H1 (cell line): ENCODE measurements at regions of chr16 and their contacts with region 1.

Region 1: DNA sequence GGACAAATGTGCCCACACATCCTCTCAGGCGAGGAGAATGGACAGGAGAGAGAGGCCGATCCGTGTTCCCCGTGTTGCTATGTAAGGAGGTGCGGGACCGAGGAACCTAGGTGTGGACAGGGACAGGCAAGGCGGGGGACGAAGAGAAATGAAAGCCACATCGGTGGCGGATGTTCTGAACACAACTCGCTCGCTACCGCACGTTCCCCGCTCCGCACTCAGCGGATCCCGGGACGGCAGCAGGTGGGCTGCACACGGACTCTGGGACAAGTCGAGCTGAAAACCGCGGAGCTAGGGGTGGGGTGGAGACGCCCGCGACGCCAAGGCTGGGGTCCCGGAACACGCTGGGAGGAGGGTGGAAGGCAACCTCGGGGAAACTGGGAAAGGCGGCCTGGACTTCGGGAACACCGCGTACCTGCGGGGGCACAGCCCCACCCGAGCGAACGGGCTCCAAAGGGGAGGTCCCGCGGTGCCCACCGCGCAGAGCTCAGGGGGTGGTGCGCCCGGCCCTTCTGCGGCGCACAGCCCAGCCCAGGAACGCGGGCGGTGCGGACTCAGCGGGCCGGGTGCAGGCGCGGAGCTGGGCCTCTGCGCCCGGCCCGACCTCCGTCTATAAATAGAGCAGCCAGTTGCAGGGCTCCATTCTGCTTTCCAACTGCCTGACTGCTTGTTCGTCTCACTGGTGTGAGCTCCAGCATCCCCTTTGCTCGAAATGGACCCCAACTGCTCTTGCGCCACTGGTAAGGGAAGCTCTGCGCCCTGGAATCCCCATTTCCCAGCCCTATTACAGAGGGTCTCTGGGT is at the start of gene MT1E:
- DNase-seq: peak in 1 of 2 experiments; percentile 66
- H3K4me3 ChIP-seq: peak within 1 kb of the TSS; percentile 26 to 61 (median 46)
- H3K27ac ChIP-seq: no peak within 1 kb of the TSS
- H3K4me1 ChIP-seq: peaks cover 0 to 17% (median 14%) of the 10 kb centered on the region in 4 experiments; a peak in 6 of 7 replicates
- H3K27me3 ChIP-seq: peaks cover 53 to 86% (median 82%) of the 10 kb centered on the region in 4 experiments
- CTCF ChIP-seq: no peak
- EP300 ChIP-seq: no peak
- POLR2A ChIP-seq: no peak
- RAD21 ChIP-seq: no peak
- total RNA-seq, gene MT1E: 3.5 and 7.9 TPM in 2 replicates

Region 2: DNA sequence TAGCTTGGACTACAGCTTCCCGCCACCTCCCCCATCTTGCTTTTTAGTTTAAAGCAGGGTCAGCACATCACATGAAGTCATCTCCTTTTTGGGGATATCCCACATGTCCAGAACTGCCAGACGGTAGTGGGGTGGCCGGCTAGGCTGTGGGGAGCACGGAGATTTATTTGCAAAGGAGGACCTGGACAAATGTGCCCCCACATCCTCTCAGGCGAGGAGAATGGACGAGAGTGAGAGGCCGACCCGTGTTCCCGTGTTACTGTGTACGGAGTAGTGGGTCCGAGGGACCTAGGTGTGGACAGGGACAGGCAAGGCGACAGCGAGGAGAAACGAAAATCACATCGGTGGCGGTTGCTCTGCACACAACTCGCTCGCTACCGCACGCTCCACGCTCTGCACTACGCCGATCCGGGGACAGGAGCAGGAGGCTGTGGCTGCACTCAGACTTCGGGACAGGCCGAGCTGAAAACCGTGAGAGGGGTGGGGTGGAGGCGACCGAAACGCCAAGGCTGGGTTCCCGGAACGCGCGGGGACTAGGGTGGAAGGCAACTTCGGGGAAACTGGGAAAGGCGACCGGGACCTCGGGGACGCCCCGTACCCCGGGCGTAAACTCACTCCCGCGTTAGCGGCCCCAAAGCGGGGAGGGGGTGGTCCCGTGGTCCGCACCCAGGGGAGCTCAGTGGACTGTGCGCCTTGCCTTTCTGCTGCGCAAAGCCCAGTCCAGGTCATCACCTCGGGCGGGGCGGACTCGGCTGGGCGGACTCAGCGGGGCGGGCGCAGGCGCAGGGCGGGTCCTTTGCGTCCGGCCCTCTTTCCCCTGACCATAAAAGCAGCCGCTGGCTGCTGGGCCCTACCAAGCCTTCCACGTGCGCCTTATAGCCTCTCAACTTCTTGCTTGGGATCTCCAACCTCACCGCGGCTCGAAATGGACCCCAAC is 12.7 kb after region 1 on chr16 and contains the start of gene MT1A:
- CTCF ChIA-PET with region 1: interaction called, 12 read pairs
- POLR2A ChIA-PET with region 1: interaction called, 32 read pairs
- DNase-seq: peak in 1 of 2 experiments; percentile 81
- H3K4me3 ChIP-seq: peak within 1 kb of the TSS; percentile 7 to 56 (median 27); a peak in 6 of 8 replicates
- H3K27ac ChIP-seq: no peak within 1 kb of the TSS
- H3K4me1 ChIP-seq: peaks cover 3 to 19% (median 8%) of the 10 kb centered on the region in 4 experiments
- H3K27me3 ChIP-seq: peaks cover 90 to 100% (median 99%) of the 10 kb centered on the region in 4 experiments
- CTCF ChIP-seq: no peak
- EP300 ChIP-seq: no peak
- POLR2A ChIP-seq: no peak
- RAD21 ChIP-seq: no peak
- total RNA-seq, gene MT1A: not detected in 2 replicates

Region 3: GRCh38 chr16:56657555-56658326 is 32.4 kb after region 1 on chr16 and contains the start of gene MT1F:
- CTCF ChIA-PET with region 1: interaction called, 7 read pairs
- POLR2A ChIA-PET with region 1: interaction called, 21 read pairs
- DNase-seq: peak; percentile 64 to 86
- H3K4me3 ChIP-seq: peak within 1 kb of the TSS; percentile 52 to 76 (median 54)
- H3K27ac ChIP-seq: no peak within 1 kb of the TSS
- H3K4me1 ChIP-seq: peaks cover 0 to 12% (median 5%) of the 10 kb centered on the region in 4 experiments; a peak in 6 of 7 replicates
- H3K27me3 ChIP-seq: peaks cover 39 to 68% (median 62%) of the 10 kb centered on the region in 4 experiments
- CTCF ChIP-seq: no peak
- EP300 ChIP-seq: no peak
- POLR2A ChIP-seq: no peak
- RAD21 ChIP-seq: peak; percentile 15 to 35; a peak in 3 of 4 replicates
- total RNA-seq, gene MT1F: 5.2 and 5.9 TPM in 2 replicates

Region 4: DNA sequence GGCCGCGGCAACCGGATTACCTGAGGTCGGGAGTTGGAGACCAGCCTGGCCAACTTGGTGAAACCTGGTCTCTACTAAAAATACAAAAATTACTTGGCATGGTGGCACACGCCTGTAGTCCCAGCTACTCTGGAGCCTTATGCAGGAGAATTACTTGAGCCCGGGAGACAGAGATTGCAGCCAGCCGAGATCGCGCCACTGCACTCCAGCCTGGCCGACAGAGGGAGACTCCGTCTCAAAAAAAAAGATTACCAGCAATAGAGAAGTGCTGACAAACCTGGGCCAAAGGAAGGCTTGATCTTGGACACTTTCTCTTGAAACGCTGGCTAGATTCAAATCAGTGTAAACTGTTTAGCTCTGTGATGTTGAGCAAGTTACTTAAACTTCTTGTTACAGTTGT is 48.6 kb after region 1 on chr16:
- CTCF ChIA-PET with region 1: interaction called, 3 read pairs
- POLR2A ChIA-PET with region 1: interaction called, 57 read pairs
- DNase-seq: no peak
- H3K4me3 ChIP-seq: no peak overlapping the region
- H3K27ac ChIP-seq: no peak overlapping the region
- H3K4me1 ChIP-seq: peaks cover 3 to 25% (median 15%) of the 10 kb centered on the region in 4 experiments
- H3K27me3 ChIP-seq: peaks cover 30 to 71% (median 52%) of the 10 kb centered on the region in 4 experiments
- CTCF ChIP-seq: peak; percentile 60 to 73 (median 64)
- EP300 ChIP-seq: no peak
- POLR2A ChIP-seq: no peak
- RAD21 ChIP-seq: peak; percentile 68 to 78

Region 5: GRCh38 chr16:56753410-56753809 is 128.1 kb after region 1 on chr16:
- CTCF ChIA-PET with region 1: no interaction called
- POLR2A ChIA-PET with region 1: no interaction called
- DNase-seq: no peak
- H3K4me3 ChIP-seq: no peak overlapping the region
- H3K27ac ChIP-seq: no peak overlapping the region
- H3K4me1 ChIP-seq: no peaks in the 10 kb centered on the region
- H3K27me3 ChIP-seq: no peaks in the 10 kb centered on the region
- CTCF ChIP-seq: no peak
- EP300 ChIP-seq: no peak
- POLR2A ChIP-seq: no peak
- RAD21 ChIP-seq: no peak

Region 6: DNA sequence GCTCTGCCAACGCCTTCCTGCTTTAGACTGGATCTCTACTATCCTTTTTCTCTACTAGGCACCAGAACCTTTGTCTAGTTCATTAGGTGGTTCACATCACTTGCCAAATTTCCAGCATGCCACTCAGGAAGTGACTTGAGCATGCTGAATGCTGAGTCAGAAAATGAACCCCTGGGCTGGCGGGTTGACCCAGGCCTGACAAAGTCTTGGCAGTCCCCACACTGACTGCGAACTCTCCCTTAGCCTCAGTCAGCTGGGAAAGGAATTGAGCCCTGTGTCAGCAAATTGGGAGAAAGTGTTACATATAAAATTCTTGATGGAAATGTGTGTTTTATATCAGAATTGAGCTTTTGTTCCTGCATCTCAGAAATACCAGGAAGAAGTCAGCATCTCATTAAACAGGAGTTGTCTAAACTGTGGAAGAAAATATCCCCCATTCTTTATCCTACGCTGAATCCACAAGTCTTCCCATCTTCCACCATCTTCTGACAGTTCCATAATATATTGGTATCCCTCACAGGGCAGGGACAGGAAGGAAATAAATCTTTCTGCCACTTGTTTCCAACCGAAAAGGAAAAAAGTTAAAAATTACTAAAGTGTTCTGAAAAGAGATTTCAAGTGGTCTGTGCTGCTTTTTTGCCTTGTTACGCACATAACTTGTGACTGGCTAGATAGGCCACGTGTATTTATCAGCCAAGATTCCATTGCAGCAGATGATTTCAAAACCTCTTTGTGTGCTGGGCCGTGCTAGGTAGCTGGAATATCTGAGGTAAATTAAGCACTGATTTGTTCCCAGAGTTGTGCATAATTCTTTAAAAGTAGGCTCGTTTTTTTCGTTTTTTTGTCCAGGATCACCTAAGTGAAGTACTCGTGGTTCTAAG is 223.0 kb after region 1 on chr16:
- CTCF ChIA-PET with region 1: no interaction called
- POLR2A ChIA-PET with region 1: no interaction called
- DNase-seq: no peak
- H3K4me3 ChIP-seq: no peak overlapping the region
- H3K27ac ChIP-seq: no peak overlapping the region
- H3K4me1 ChIP-seq: peaks cover 2 to 11% (median 7%) of the 10 kb centered on the region in 4 experiments; a peak in 5 of 7 replicates
- H3K27me3 ChIP-seq: no peaks in the 10 kb centered on the region
- CTCF ChIP-seq: no peak
- EP300 ChIP-seq: no peak
- POLR2A ChIP-seq: no peak
- RAD21 ChIP-seq: no peak